ENCODE measurements at regions of chr13 and their contacts with region 1.

Region 1: GRCh38 chr13:88507909-88508308 is 836.7 kb downstream of the SLITRK5 start:
- DNase-seq: no peak
- ATAC-seq: no peak
- H3K4me3 Mint-ChIP-seq: no peak overlapping the region
- H3K27ac Mint-ChIP-seq: no peak overlapping the region
- H3K4me1 Mint-ChIP-seq: peaks cover 22% of the 10 kb centered on the region
- H3K27me3 Mint-ChIP-seq: peaks cover 10% of the 10 kb centered on the region; the same call in 1 of the 2 replicates
- CTCF ChIP-seq: no peak

Region 2: DNA sequence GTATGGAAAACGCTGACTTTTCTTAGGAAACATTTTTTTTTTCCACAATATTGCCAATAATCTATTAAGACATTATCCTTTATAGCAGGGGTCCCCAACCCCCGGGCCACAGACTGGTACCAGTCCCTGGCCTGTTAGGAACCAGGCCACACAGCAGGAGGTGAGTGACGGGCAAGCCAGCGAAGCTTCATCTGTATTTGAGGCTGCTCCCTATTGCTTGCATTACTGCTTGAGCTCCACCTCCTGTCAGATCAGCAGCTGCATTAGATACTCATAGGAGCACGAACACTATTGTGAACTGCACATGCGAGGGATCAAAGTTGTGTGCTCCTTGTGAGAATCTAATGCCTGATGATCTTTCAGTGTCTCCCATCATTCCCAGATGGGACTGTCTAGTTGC is 43.1 kb before region 1 on chr13:
- CTCF ChIA-PET with region 1: no interaction called
- POLR2A ChIA-PET with region 1: no interaction called
- DNase-seq: no peak
- ATAC-seq: no peak
- H3K4me3 Mint-ChIP-seq: no peak overlapping the region
- H3K27ac Mint-ChIP-seq: no peak overlapping the region
- H3K4me1 Mint-ChIP-seq: peaks cover 40% of the 10 kb centered on the region
- H3K27me3 Mint-ChIP-seq: peaks cover 3% of the 10 kb centered on the region; the same call in 1 of the 2 replicates
- CTCF ChIP-seq: no peak

Region 3: DNA sequence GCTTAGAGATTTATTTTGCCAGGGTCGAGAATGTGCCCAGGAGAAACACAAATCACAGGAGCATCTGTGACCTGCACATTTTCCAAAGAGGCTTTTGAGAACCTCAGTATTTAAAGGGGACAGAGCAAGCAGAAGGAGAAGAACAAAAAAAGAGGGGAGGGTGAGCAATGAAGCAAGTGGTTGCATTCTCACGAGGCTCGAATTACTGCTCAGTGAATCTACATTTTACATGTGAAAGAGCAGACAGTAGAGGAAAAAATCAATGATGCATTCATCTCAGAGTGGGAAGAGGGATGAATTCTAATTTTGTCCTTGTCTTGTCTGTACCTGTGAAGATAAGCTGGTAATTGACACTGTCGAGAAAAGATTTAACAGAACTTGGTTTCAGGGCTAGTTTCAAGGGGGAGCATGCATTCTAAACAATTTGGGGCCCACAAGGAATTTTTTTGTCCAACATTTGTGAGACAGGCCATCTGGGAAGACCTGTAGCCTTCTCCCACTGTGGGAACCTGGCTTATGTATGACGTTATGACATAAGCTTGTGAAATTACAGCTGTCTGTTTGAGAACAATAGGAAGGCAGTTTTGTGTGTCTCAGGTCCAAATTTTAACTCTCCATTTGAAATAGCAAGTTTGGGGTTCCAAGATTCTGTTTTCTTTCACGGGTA is 18.4 kb after region 1 on chr13:
- CTCF ChIA-PET with region 1: no interaction called
- POLR2A ChIA-PET with region 1: interaction called, 14 read pairs
- DNase-seq: peak; percentile 15
- ATAC-seq: peak; percentile 82
- H3K4me3 Mint-ChIP-seq: no peak overlapping the region
- H3K27ac Mint-ChIP-seq: peak overlapping the region; percentile 97
- H3K4me1 Mint-ChIP-seq: peaks cover 20% of the 10 kb centered on the region
- H3K27me3 Mint-ChIP-seq: no peaks in the 10 kb centered on the region; the same call in 1 of the 2 replicates
- CTCF ChIP-seq: no peak

Region 4: DNA sequence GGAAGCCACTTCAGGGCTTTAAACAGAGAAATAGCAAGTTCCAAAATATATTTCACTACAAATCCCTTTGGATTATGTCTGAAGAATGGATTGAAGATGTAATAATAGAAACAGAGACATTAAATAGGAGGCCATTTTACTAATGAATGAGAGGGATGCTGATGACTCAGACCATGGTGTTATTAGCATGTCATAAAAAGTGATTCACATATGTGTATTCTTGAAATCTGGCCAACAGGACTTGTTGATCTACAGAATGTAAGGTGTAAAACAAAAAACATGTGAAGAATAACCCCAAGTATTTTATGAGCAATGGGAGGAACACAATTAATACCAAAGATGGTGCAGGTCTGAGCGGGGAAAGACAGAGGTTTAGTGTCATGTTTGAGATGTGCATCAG is 36.9 kb after region 1 on chr13:
- CTCF ChIA-PET with region 1: no interaction called
- POLR2A ChIA-PET with region 1: no interaction called
- DNase-seq: no peak
- ATAC-seq: no peak
- H3K4me3 Mint-ChIP-seq: no peak overlapping the region
- H3K27ac Mint-ChIP-seq: no peak overlapping the region
- H3K4me1 Mint-ChIP-seq: no peaks in the 10 kb centered on the region
- H3K27me3 Mint-ChIP-seq: no peaks in the 10 kb centered on the region
- CTCF ChIP-seq: no peak

Region 5: DNA sequence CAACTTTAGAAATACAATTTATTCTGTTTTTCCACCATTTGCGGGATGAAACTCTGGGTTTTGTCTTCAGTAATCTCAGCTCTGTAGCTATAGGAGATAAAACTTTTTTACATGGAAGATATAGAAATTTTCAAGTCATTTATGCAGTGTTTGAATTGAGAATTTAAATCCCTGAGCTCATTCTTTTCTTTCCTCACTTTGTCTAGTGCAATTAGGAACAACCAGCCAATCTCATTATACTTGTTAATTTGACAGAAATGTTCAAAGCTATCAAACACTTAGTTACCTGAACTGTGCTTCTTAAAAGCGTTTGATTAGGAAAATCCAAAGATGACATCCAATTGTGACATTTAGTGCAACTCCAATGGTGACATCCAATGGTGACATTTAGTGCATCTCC is 177.6 kb after region 1 on chr13:
- CTCF ChIA-PET with region 1: no interaction called
- POLR2A ChIA-PET with region 1: no interaction called
- DNase-seq: no peak
- ATAC-seq: no peak
- H3K4me3 Mint-ChIP-seq: no peak overlapping the region
- H3K27ac Mint-ChIP-seq: no peak overlapping the region
- H3K4me1 Mint-ChIP-seq: peaks cover 7% of the 10 kb centered on the region
- H3K27me3 Mint-ChIP-seq: no peaks in the 10 kb centered on the region
- CTCF ChIP-seq: no peak